Mammary epithelial cell (primary cell): ENCODE measurements at regions of chr3 and their contacts with region 1.

Region 1: DNA sequence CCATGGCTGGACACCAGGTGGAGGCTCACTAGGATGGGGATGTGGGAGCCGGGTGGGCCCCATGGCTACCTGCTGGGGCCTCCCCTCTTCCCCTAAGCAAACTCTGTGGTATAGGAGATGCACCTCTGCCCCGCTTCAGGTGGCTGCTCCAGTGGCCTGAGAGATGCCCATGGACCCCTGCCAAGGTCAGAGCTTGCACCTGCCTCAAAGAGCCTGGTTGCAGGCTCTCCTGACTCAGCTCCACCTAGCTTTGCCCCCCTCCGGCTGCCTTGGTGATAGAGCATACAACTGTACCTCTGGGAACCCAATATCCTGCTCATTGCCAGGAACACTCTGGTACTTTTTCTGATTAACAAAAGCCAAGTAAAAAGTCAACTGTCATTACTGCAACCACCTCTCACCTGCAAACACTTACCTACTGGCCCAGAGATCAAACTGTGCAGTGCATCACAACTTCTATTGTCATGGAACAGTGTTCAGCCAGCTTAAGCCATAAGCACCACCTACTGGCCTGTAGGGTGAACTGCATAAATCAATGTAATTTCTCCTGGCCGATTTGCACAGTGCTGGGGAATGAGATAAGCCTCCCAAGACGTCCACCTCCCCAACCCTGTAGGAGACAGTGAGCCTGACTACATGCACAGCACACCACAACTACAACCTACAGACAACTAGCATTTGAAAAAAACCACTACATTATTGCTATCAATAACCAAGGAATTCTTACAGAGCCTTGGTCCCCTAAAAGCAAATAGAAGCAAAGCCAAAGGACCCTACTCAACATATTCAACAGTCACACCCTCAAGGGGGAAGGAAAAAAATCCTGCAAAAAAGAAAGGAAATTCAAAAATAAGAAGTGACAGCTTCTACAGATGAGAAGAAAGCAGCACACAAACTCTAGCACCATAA is 352.4 kb upstream of the ARHGEF26 start:
- DNase-seq: peak; percentile 46
- H3K4me3 ChIP-seq: no peak overlapping the region
- H3K27ac ChIP-seq: no peak overlapping the region
- H3K4me1 ChIP-seq: no peaks in the 10 kb centered on the region
- H3K27me3 ChIP-seq: no peaks in the 10 kb centered on the region
- CTCF ChIP-seq: peak; percentile 90 to 92

Region 2: DNA sequence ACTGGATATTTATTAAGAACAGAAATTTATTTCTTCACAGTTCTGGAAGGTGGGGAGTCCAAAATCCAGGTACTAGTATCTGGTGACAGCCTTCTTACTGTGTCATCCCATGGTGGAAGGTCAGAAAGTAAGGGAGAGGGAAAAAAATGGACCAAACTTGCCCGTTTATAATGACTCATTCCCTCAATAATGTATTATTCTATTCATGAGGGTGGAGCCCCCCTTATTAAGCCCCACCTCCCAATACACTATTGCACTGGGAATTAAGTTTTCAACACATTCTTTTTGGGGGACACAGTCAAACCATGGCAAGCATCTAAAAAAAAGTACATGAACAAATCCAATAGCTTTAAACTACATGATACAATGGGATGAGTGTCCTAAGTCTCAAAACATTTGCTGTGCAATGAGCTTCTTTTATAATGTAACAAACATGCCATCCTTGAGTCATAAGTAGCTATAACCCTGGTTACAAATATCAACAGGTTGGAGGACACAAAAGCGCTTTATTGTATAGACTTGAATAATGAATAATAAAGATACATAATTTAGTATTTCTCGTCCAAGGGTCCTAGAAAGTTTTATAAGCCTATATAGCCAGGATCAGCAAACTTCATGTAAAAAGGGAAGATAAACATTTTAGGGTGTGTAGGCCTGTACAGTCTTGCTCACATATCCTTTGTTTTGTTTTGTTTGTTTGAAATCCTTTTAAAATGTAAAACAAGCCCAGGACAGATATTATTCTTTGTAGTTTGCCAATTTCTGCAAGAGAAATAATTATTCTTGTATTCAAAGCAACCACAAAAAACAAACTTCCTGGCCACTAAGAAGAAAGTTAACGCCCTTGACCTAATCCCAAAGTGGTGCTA is 767.4 kb before region 1 on chr3:
- CTCF ChIA-PET with region 1: no interaction called
- dilution Hi-C with region 1: no loop called
- in situ Hi-C with region 1: loop called in 1 of 2 experiments (anchors 25 kb)
- intact Hi-C with region 1: no loop called
- DNase-seq: peak; percentile 20
- H3K4me3 ChIP-seq: no peak overlapping the region
- H3K27ac ChIP-seq: no peak overlapping the region
- H3K4me1 ChIP-seq: no peaks in the 10 kb centered on the region
- H3K27me3 ChIP-seq: no peaks in the 10 kb centered on the region
- CTCF ChIP-seq: no peak

Region 3: GRCh38 chr3:153043729-153044328 is 725.0 kb before region 1 on chr3:
- CTCF ChIA-PET with region 1: no interaction called
- dilution Hi-C with region 1: no loop called
- in situ Hi-C with region 1: loop called in 1 of 2 experiments (anchors 25 kb)
- intact Hi-C with region 1: loop called (anchors 1 kb)
- DNase-seq: peak; percentile 71
- H3K4me3 ChIP-seq: peak overlapping the region in 1 of 3 experiments; percentile 25
- H3K27ac ChIP-seq: peak overlapping the region; percentile 94
- H3K4me1 ChIP-seq: peaks cover 20% of the 10 kb centered on the region
- H3K27me3 ChIP-seq: no peaks in the 10 kb centered on the region
- CTCF ChIP-seq: no peak

Region 4: GRCh38 chr3:153291056-153291685 is 477.6 kb before region 1 on chr3:
- CTCF ChIA-PET with region 1: no interaction called
- dilution Hi-C with region 1: no loop called
- in situ Hi-C with region 1: loop called in 1 of 2 experiments (anchors 25 kb)
- intact Hi-C with region 1: loop called (anchors 2 kb)
- DNase-seq: peak; percentile 31
- H3K4me3 ChIP-seq: no peak overlapping the region
- H3K27ac ChIP-seq: no peak overlapping the region
- H3K4me1 ChIP-seq: peaks cover 34% of the 10 kb centered on the region
- H3K27me3 ChIP-seq: no peaks in the 10 kb centered on the region
- CTCF ChIP-seq: peak; percentile 35 to 70

Region 5: DNA sequence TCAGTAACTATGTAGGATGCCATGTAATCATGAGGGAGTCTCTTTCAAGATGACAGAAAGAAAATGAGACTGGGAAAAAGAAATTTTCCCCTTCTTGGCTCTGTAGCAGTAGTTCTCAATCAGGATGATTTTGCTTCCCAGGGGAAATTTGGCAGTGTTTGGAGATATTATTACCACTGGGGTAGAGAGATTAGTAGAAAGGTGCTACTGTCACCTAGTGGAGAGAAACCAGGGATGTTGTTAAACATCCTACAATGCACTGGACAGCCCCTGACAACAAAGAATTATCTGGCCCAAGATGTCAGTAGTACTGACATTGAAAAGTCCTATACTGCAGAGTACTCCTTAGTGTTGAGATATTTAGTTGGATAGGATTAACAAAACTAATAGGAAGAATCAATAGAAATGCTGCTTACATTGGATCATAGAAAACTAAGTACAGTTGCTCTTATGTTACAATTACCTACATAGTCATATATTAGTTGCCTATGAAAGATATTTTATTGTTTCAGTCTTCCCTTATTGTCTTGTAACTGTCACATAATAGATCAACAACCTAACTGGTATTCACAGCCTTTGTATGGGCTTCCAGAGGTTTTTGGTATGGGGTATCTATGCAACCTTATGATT is 173.5 kb before region 1 on chr3:
- CTCF ChIA-PET with region 1: no interaction called
- dilution Hi-C with region 1: no loop called
- in situ Hi-C with region 1: no loop called
- intact Hi-C with region 1: loop called (anchors 2 kb)
- DNase-seq: peak; percentile 45
- H3K4me3 ChIP-seq: no peak overlapping the region
- H3K27ac ChIP-seq: no peak overlapping the region
- H3K4me1 ChIP-seq: peaks cover 18% of the 10 kb centered on the region
- H3K27me3 ChIP-seq: no peaks in the 10 kb centered on the region
- CTCF ChIP-seq: peak; percentile 78 to 96